ENCODE measurements at regions of chr18 and their contacts with region 1.

Region 1: GRCh38 chr18:47997338-47997780 is 66.9 kb upstream of the SMAD2 start:
- DNase-seq: peak; percentile 50
- ATAC-seq: no peak
- H3K4me3 Mint-ChIP-seq: no peak overlapping the region
- H3K27ac Mint-ChIP-seq: no peak overlapping the region
- H3K4me1 Mint-ChIP-seq: no peaks in the 10 kb centered on the region
- H3K27me3 Mint-ChIP-seq: peaks cover 10% of the 10 kb centered on the region

Region 2: GRCh38 chr18:47772374-47773248 is 224.7 kb before region 1 on chr18:
- CTCF ChIA-PET with region 1: interaction called, 22 read pairs
- DNase-seq: peak; percentile 71
- ATAC-seq: peak; percentile 65
- H3K4me3 Mint-ChIP-seq: no peak overlapping the region
- H3K27ac Mint-ChIP-seq: no peak overlapping the region
- H3K4me1 Mint-ChIP-seq: peaks cover 7% of the 10 kb centered on the region
- H3K27me3 Mint-ChIP-seq: peaks cover 4% of the 10 kb centered on the region

Region 3: GRCh38 chr18:48007955-48008701 is 10.8 kb after region 1 on chr18:
- CTCF ChIA-PET with region 1: interaction called, 16 read pairs
- DNase-seq: no peak
- ATAC-seq: peak; percentile 83
- H3K4me3 Mint-ChIP-seq: peak overlapping the region; percentile 51
- H3K27ac Mint-ChIP-seq: no peak overlapping the region
- H3K4me1 Mint-ChIP-seq: peaks cover 14% of the 10 kb centered on the region
- H3K27me3 Mint-ChIP-seq: peaks cover 44% of the 10 kb centered on the region

Measured in activated CD8-positive, alpha-beta memory T cell treated with anti-CD3 and anti-CD28 coated beads, Interleukin-2, amount 10 ng/mL, durations not matched to agents 7 days and 5 days (primary cell).